Activated CD8-positive, alpha-beta T cell treated with anti-CD3 and anti-CD28 coated beads for 36 hours (primary cell): ENCODE measurements at regions of chr9 and their contacts with region 1.

Region 1: GRCh38 chr9:83649080-83649479 is 26.1 kb downstream of the IDNK start:
- DNase-seq: peak; percentile 80
- ATAC-seq: peak; percentile 88
- H3K4me3 Mint-ChIP-seq: no peak overlapping the region
- H3K27ac Mint-ChIP-seq: no peak overlapping the region
- H3K4me1 Mint-ChIP-seq: no peaks in the 10 kb centered on the region
- H3K27me3 Mint-ChIP-seq: no peaks in the 10 kb centered on the region
- CTCF ChIP-seq: peak; percentile 61

Region 2: GRCh38 chr9:83630938-83631457 is 18.1 kb before region 1 on chr9:
- CTCF ChIA-PET with region 1: interaction called, 59 read pairs
- POLR2A ChIA-PET with region 1: no interaction called
- intact Hi-C with region 1: no loop called
- DNase-seq: no peak
- ATAC-seq: no peak
- H3K4me3 Mint-ChIP-seq: no peak overlapping the region
- H3K27ac Mint-ChIP-seq: no peak overlapping the region
- H3K4me1 Mint-ChIP-seq: peaks cover 3% of the 10 kb centered on the region
- H3K27me3 Mint-ChIP-seq: no peaks in the 10 kb centered on the region
- CTCF ChIP-seq: no peak

Region 3: GRCh38 chr9:83636813-83637212 is 12.3 kb before region 1 on chr9:
- CTCF ChIA-PET with region 1: interaction called, 59 read pairs
- POLR2A ChIA-PET with region 1: interaction called, 6 read pairs
- intact Hi-C with region 1: no loop called
- DNase-seq: no peak
- ATAC-seq: no peak
- H3K4me3 Mint-ChIP-seq: no peak overlapping the region
- H3K27ac Mint-ChIP-seq: no peak overlapping the region
- H3K4me1 Mint-ChIP-seq: no peaks in the 10 kb centered on the region
- H3K27me3 Mint-ChIP-seq: no peaks in the 10 kb centered on the region
- CTCF ChIP-seq: no peak

Region 4: DNA sequence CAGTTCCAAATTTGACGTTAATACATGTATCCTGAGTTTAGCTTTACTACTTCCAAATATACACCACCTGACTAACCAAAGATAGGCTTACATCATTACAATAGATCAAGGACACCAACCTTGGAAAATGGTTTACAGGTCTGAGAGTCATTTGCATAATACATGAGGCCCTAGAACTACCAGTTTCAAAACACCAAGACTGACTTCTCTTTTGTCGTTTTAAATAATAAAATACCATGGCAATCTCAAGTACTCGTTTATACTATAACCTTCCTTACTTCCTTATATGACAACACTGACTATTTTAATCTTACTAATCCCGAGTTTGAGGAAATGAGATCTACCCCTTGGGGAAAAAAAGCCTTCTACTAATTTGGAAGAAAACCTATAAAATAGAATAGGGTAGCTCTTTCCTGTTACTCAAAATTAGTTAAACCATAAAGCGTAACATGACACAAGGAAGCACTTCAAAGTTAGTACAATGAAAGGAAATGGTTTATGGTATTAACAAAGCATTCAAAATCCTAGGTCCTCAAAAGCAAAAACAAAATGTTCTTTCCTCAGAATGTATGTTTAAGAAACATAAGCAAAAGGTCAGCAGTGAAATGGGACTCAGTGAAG is 16.6 kb after region 1 on chr9:
- CTCF ChIA-PET with region 1: interaction called, 12 read pairs
- POLR2A ChIA-PET with region 1: interaction called, 4 read pairs
- intact Hi-C with region 1: no loop called
- DNase-seq: no peak
- ATAC-seq: no peak
- H3K4me3 Mint-ChIP-seq: no peak overlapping the region
- H3K27ac Mint-ChIP-seq: peak overlapping the region; percentile 30
- H3K4me1 Mint-ChIP-seq: peaks cover 19% of the 10 kb centered on the region
- H3K27me3 Mint-ChIP-seq: no peaks in the 10 kb centered on the region
- CTCF ChIP-seq: no peak

Region 5: GRCh38 chr9:83754383-83754977 is 105.4 kb after region 1 on chr9:
- CTCF ChIA-PET with region 1: no interaction called
- POLR2A ChIA-PET with region 1: no interaction called
- intact Hi-C with region 1: no loop called
- DNase-seq: no peak
- ATAC-seq: no peak
- H3K4me3 Mint-ChIP-seq: no peak overlapping the region
- H3K27ac Mint-ChIP-seq: no peak overlapping the region
- H3K4me1 Mint-ChIP-seq: no peaks in the 10 kb centered on the region
- H3K27me3 Mint-ChIP-seq: no peaks in the 10 kb centered on the region
- CTCF ChIP-seq: no peak

Region 6: GRCh38 chr9:83956434-83957247 is 307.6 kb after region 1 on chr9:
- CTCF ChIA-PET with region 1: no interaction called
- POLR2A ChIA-PET with region 1: no interaction called
- intact Hi-C with region 1: no loop called
- DNase-seq: peak; percentile 76
- ATAC-seq: peak; percentile 81
- H3K4me3 Mint-ChIP-seq: peak overlapping the region; percentile 97
- H3K27ac Mint-ChIP-seq: peak overlapping the region; percentile 97
- H3K4me1 Mint-ChIP-seq: peaks cover 9% of the 10 kb centered on the region
- H3K27me3 Mint-ChIP-seq: no peaks in the 10 kb centered on the region
- CTCF ChIP-seq: no peak